MCF 10A (cell line): ENCODE measurements at regions of chr3 and their contacts with region 1.

Region 1: GRCh38 chr3:57169872-57170623 is 4.9 kb upstream of the IL17RD start:
- DNase-seq: peak; percentile 80
- H3K4me3 Mint-ChIP-seq: peak overlapping the region; percentile 52
- H3K27ac Mint-ChIP-seq: no peak overlapping the region
- H3K4me1 Mint-ChIP-seq: peaks cover 7% of the 10 kb centered on the region
- H3K27me3 Mint-ChIP-seq: peaks cover 16% of the 10 kb centered on the region
- CTCF ChIP-seq: peak; percentile 81

Region 2: DNA sequence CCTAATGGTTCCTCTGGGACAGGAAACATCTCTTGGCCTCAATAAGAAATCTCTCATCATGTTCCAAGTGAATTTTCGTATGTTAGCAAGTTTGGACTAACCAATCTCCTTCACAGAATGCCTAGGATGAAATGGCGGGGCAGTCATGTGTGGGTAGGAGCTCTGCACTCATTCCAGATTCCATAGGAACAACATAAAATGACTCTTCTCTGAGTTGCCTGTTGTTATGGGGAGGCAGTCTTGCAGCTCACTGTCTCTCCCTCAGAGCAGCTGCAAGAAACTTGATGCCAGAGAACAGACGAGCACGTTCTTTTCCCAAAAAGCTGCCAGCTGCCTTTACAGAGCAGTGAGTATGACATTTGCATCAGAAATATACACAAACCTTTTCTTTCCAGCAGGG is 75.5 kb before region 1 on chr3:
- CTCF ChIA-PET with region 1: interaction called, 10 read pairs
- POLR2A ChIA-PET with region 1: interaction called, 4 read pairs
- intact Hi-C with region 1: no loop called
- DNase-seq: no peak
- H3K4me3 Mint-ChIP-seq: no peak overlapping the region
- H3K27ac Mint-ChIP-seq: no peak overlapping the region
- H3K4me1 Mint-ChIP-seq: peaks cover 6% of the 10 kb centered on the region
- H3K27me3 Mint-ChIP-seq: no peaks in the 10 kb centered on the region
- CTCF ChIP-seq: no peak

Region 3: DNA sequence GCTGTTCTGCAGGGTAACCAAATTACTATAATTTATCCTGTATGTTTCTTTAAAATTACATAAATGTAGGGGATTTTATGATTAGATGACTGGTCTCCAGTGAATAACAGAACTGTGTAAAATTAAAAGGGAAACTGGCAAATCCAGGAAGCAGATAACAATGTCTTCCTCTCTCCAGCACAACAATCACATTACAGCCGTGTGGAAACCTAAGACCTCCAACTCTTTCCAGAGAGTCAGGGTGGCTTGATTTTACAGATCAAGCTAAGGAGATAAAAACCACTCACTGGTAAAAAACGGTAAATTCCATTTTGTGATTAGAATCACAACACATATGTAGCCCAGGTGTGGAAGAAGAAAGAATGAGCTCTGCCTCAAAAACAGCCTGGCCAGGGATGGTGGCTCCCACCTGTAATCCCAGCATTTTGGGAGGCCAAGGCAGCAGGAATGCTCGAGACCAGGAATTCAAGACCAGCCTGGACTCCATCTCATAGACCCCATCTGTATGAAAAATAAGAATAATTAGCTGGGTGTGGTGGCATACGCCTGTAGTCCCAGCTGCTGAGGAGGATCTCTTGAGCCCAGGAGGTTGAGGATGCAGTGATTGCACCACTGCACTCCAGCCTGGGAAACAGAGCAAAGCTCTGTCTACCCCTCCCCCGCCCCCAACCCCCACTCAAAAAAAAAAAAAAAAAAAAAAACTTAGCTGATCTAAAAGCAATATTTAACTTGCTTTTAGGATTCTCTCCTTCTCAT is 33.9 kb before region 1 on chr3:
- CTCF ChIA-PET with region 1: interaction called, 12 read pairs
- POLR2A ChIA-PET with region 1: no interaction called
- intact Hi-C with region 1: no loop called
- DNase-seq: no peak
- H3K4me3 Mint-ChIP-seq: no peak overlapping the region
- H3K27ac Mint-ChIP-seq: no peak overlapping the region
- H3K4me1 Mint-ChIP-seq: no peaks in the 10 kb centered on the region
- H3K27me3 Mint-ChIP-seq: peaks cover 17% of the 10 kb centered on the region
- CTCF ChIP-seq: no peak

Region 4: GRCh38 chr3:57227204-57227929 is 57.3 kb after region 1 on chr3 and contains the start of gene APPL1:
- CTCF ChIA-PET with region 1: interaction called, 53 read pairs
- POLR2A ChIA-PET with region 1: interaction called, 6 read pairs
- intact Hi-C with region 1: loop called (anchors 1 kb)
- DNase-seq: peak; percentile 90
- H3K4me3 Mint-ChIP-seq: peak within 1 kb of the TSS; percentile 84
- H3K27ac Mint-ChIP-seq: peak within 1 kb of the TSS; percentile 75
- H3K4me1 Mint-ChIP-seq: peaks cover 11% of the 10 kb centered on the region
- H3K27me3 Mint-ChIP-seq: no peaks in the 10 kb centered on the region
- CTCF ChIP-seq: peak; percentile 5
- total RNA-seq, gene APPL1: 26.4 and 35.4 TPM in 2 replicates

Region 5: GRCh38 chr3:57423335-57423734 is 253.3 kb after region 1 on chr3:
- CTCF ChIA-PET with region 1: no interaction called
- POLR2A ChIA-PET with region 1: no interaction called
- intact Hi-C with region 1: no loop called
- DNase-seq: no peak
- H3K4me3 Mint-ChIP-seq: no peak overlapping the region
- H3K27ac Mint-ChIP-seq: no peak overlapping the region
- H3K4me1 Mint-ChIP-seq: no peaks in the 10 kb centered on the region
- H3K27me3 Mint-ChIP-seq: peaks cover 21% of the 10 kb centered on the region
- CTCF ChIP-seq: no peak

Region 6: DNA sequence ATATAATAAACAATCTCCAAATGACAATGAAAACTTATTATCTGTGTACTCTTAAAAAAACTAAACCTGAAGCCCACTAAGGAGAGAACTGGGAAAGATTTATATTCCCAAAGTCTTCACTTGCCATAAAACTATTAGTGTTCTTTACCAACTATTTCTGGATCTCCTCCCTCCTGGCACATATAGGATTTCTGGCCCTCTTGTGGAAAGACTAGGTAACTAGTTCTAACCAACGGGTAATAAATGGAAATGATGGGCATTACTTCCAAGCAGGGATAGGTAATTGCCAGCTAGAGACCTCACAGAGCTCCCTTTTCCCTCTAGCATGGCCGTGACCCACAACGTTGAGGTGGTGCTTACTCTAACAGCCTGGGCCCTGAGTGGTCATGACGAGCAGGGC is 264.0 kb after region 1 on chr3:
- CTCF ChIA-PET with region 1: interaction called, 5 read pairs
- POLR2A ChIA-PET with region 1: no interaction called
- intact Hi-C with region 1: loop called (anchors 1 kb)
- DNase-seq: peak; percentile 69
- H3K4me3 Mint-ChIP-seq: no peak overlapping the region
- H3K27ac Mint-ChIP-seq: no peak overlapping the region
- H3K4me1 Mint-ChIP-seq: no peaks in the 10 kb centered on the region
- H3K27me3 Mint-ChIP-seq: peaks cover 26% of the 10 kb centered on the region
- CTCF ChIP-seq: peak; percentile 48